ENCODE measurements at regions of chr15 and their contacts with region 1.

Region 1: DNA sequence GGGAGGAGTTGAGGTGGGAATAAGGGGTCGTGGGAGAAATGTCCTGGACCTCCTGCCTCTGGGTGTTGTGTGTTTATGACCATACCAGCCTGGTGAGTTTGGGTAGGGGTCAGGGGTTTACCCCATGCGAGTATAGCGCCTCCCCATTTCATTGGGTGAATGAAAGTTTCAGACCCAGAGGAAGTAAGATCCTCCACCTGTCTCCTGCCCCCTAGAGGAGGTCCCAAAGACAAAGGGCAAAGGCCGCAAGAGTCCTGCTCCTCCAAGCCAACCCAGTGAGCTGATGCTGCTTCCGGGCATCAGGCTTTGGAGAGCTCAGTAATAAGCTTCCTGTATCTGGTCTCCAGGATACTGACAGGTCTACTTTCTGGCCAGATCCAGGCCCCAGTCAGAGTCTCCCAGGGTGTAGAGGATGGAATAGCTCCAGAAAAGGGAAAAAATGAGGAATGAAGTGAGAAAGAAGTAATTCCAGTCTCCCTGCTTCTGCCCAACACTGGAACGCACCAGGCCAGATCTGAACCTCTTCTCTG is 6.4 kb upstream of the TBC1D21 start:
- DNase-seq: peak; percentile 67
- ATAC-seq: peak; percentile 93
- H3K4me3 Mint-ChIP-seq: no peak overlapping the region
- H3K27ac Mint-ChIP-seq: no peak overlapping the region
- H3K4me1 Mint-ChIP-seq: peaks cover 37% of the 10 kb centered on the region
- H3K27me3 Mint-ChIP-seq: no peaks in the 10 kb centered on the region
- CTCF ChIP-seq: no peak; the same call in 1 of the 2 replicates

Region 2: GRCh38 chr15:73712088-73712487 is 154.9 kb before region 1 on chr15:
- CTCF ChIA-PET with region 1: interaction called, 12 read pairs
- POLR2A ChIA-PET with region 1: no interaction called
- DNase-seq: peak; percentile 48
- ATAC-seq: peak; percentile 68
- H3K4me3 Mint-ChIP-seq: no peak overlapping the region
- H3K27ac Mint-ChIP-seq: peak overlapping the region; percentile 45; the same call in 1 of the 2 replicates
- H3K4me1 Mint-ChIP-seq: no peaks in the 10 kb centered on the region
- H3K27me3 Mint-ChIP-seq: no peaks in the 10 kb centered on the region
- CTCF ChIP-seq: no peak

Region 3: GRCh38 chr15:73767821-73768501 is 99.0 kb before region 1 on chr15:
- CTCF ChIA-PET with region 1: interaction called, 16 read pairs
- POLR2A ChIA-PET with region 1: no interaction called
- DNase-seq: peak; percentile 57
- ATAC-seq: peak; percentile 77
- H3K4me3 Mint-ChIP-seq: no peak overlapping the region; the same call in 1 of the 2 replicates
- H3K27ac Mint-ChIP-seq: no peak overlapping the region
- H3K4me1 Mint-ChIP-seq: peaks cover 28% of the 10 kb centered on the region
- H3K27me3 Mint-ChIP-seq: no peaks in the 10 kb centered on the region; the same call in 1 of the 2 replicates
- CTCF ChIP-seq: no peak

Region 4: DNA sequence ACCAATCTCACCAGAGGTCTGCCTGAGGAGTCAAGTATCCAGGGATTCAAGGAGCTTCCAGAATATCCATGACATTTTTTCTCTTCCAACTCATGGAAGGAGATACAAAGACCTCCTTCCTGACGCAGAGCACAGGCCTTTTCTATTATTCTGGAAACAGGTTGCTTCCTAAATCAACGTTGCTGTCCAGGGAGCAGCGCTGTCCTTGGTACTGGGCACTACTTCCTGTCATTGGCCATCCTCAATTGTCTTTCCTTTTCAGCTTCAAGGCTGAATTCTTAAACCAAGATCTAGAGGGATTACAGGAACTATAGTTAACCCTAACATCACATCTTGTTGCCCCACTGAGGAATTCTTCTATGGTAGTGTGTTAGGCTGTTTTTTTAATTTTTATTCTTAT is 43.9 kb before region 1 on chr15:
- CTCF ChIA-PET with region 1: interaction called, 13 read pairs
- POLR2A ChIA-PET with region 1: no interaction called
- DNase-seq: peak; percentile 56
- ATAC-seq: no peak
- H3K4me3 Mint-ChIP-seq: no peak overlapping the region
- H3K27ac Mint-ChIP-seq: no peak overlapping the region
- H3K4me1 Mint-ChIP-seq: no peaks in the 10 kb centered on the region; the same call in 1 of the 2 replicates
- H3K27me3 Mint-ChIP-seq: no peaks in the 10 kb centered on the region; the same call in none of the 2 replicates
- CTCF ChIP-seq: no peak

Region 5: DNA sequence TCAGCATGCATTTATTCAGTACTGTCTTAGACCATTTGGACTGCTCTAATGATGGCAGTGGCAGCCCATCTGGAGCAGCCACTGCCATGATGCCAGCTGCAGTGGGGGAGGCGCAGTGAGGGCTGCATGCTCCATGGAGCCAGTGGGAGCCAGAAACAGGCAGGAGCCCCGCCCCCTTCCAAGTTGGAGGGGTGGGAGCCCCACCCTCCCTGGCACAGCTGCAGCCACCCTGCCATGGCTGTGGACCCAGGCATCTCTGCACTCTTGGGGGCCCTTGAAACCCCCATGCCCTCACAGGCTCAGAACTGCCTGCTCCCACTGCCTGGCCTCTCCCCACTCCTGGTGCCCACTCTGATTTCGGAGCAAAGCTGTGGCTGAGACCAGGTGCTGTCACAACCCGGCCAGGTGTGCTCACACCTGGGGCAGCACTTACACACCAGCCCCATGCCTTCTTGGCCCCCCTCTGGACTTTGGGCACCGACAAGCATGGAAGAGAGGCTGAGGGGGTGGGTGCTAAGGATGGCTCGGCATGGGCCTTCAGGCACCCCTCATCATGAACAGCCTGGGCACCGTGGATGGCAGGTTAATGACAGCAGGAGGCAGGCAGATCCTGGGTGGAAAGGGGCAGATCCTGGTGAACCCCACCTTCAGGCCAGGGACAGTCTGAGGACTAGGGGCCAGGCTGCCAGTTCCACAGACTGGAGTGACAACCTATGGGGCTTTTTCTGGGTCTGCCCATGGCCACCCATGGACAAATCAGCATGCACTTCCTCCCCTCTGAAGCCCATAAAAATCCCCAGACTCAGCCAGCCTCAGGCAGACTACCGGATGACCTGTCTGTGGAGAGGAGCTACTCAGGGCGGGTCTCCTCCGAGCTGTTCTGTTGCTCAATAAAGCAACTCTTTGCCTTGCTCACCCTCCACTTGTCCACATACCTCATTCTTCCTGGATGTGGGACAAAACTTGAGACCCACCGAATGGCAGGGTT is 24.7 kb after region 1 on chr15:
- CTCF ChIA-PET with region 1: interaction called, 35 read pairs
- POLR2A ChIA-PET with region 1: no interaction called
- DNase-seq: no peak
- ATAC-seq: no peak
- H3K4me3 Mint-ChIP-seq: no peak overlapping the region
- H3K27ac Mint-ChIP-seq: no peak overlapping the region
- H3K4me1 Mint-ChIP-seq: peaks cover 12% of the 10 kb centered on the region
- H3K27me3 Mint-ChIP-seq: peaks cover 4% of the 10 kb centered on the region; the same call in 1 of the 2 replicates
- CTCF ChIP-seq: no peak

Region 6: DNA sequence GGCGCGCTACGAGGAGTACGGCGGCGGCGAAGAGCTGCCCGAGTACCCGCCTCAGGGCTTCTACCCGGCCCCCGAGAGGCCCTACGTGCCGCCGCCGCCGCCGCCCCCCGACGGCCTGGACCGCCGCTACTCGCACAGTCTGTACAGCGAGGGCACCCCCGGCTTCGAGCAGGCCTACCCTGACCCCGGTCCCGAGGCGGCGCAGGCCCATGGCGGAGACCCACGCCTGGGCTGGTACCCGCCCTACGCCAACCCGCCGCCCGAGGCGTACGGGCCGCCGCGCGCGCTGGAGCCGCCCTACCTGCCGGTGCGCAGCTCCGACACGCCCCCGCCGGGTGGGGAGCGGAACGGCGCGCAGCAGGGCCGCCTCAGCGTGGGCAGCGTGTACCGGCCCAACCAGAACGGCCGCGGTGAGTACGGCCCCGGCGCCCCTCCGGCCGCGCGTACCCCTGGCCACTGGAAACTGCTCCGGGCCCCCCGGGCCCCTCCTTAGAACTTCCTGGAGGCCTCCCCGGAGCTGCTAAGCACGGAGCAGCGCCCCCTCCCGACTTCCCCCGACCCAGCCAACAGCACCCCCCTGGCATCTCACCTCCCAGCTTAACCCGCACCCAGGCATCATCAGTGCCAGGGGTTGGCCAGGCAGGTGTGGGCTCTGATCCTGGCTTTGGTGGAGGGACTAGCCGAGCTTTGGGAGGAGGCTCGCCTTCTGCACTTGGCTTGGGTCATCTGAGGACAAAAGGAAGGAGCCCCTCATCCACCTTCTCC is 60.7 kb after region 1 on chr15:
- CTCF ChIA-PET with region 1: interaction called, 21 read pairs
- POLR2A ChIA-PET with region 1: no interaction called
- DNase-seq: peak; percentile 74
- ATAC-seq: peak; percentile 38
- H3K4me3 Mint-ChIP-seq: peak overlapping the region; percentile 68
- H3K27ac Mint-ChIP-seq: no peak overlapping the region
- H3K4me1 Mint-ChIP-seq: peaks cover 43% of the 10 kb centered on the region
- H3K27me3 Mint-ChIP-seq: peaks cover 11% of the 10 kb centered on the region
- CTCF ChIP-seq: peak; percentile 33; the same call in 1 of the 2 replicates

Region 7: DNA sequence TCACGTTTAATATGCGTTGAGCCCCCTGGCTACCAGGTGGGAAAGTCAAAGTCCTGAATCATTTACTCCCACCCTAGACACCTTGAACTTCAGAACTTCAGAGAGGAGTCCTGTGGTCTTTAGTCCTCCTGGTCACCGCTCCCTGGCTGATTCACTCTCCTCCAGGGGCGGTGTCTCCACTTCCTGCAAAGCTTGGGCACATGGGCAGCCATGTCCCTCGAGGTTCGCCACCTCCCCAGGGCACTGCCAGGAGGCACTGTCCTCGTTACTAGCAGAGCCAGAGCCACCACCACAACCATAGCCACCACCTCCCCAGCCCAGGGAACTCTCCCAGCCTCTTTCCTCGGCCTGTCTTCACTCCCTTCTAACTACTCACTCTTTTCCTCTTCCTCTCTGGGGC is 90.3 kb after region 1 on chr15:
- CTCF ChIA-PET with region 1: no interaction called
- POLR2A ChIA-PET with region 1: no interaction called
- DNase-seq: no peak
- ATAC-seq: no peak
- H3K4me3 Mint-ChIP-seq: no peak overlapping the region
- H3K27ac Mint-ChIP-seq: no peak overlapping the region
- H3K4me1 Mint-ChIP-seq: peaks cover 2% of the 10 kb centered on the region; the same call in 1 of the 2 replicates
- H3K27me3 Mint-ChIP-seq: no peaks in the 10 kb centered on the region; the same call in 1 of the 2 replicates
- CTCF ChIP-seq: no peak